ENCODE measurements at regions of chr6 and their contacts with region 1.

Region 1: DNA sequence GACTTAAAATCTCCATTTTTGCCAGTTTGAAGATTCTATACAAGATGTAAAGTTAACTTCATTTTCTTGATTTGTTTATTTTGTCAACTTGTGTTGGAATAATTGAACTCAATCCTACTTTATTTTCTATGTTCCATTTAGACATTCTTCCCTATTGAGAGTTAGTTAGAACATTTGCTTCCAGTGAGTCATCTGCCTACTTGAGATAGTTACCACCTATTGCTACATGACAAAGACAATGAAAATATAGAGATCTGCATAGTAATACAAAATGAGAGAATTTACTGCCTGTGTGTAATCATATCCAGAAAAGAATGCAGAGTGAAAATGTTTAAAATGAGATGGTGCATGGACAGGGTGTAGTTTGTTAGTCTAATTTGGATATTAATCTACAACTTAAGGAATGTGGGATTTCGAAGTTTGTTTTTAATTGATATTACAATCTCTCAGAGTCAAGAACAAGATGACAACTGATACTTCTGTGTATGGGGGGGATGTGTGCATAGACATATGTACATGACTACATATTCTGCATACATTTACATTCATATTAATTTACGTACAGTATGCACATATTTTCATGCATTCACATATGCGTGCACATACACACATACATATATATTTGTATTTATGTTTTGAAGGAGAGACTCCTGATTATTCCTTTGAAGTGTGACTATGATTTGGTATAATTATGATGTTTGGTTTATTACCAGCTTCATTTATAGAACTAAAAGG is 420.1 kb downstream of the NKAIN2 start:
- DNase-seq: peak; percentile 67
- H3K4me3 ChIP-seq: no peak overlapping the region
- H3K27ac ChIP-seq: peak overlapping the region; percentile 56
- H3K4me1 ChIP-seq: peaks cover 22% of the 10 kb centered on the region
- H3K27me3 ChIP-seq: no peaks in the 10 kb centered on the region
- CTCF ChIP-seq: no peak

Region 2: DNA sequence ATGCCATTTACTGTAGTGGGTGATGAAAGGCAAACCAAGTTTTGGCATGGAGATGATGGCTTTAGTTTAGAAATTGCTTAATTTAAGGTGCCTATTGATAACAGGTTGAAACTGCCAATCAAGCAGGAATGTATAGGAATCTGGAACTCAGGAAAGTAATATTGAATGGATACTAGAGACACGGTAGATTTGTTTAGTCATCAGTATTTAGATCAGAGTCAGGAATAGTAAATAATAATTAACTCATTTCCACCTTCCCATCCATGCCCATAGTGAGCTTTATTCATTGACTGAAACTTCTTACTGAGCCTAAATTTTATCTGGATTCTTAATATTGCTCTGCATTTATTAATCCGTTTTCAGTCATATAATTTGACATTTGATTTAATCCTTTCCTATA is 80.2 kb after region 1 on chr6:
- CTCF ChIA-PET with region 1: no interaction called
- dilution Hi-C with region 1: no loop called
- in situ Hi-C with region 1: no loop called
- intact Hi-C with region 1: loop called (anchors 2 kb)
- DNase-seq: no peak
- H3K4me3 ChIP-seq: no peak overlapping the region
- H3K27ac ChIP-seq: no peak overlapping the region
- H3K4me1 ChIP-seq: peaks cover 14% of the 10 kb centered on the region
- H3K27me3 ChIP-seq: no peaks in the 10 kb centered on the region
- CTCF ChIP-seq: no peak

Region 3: DNA sequence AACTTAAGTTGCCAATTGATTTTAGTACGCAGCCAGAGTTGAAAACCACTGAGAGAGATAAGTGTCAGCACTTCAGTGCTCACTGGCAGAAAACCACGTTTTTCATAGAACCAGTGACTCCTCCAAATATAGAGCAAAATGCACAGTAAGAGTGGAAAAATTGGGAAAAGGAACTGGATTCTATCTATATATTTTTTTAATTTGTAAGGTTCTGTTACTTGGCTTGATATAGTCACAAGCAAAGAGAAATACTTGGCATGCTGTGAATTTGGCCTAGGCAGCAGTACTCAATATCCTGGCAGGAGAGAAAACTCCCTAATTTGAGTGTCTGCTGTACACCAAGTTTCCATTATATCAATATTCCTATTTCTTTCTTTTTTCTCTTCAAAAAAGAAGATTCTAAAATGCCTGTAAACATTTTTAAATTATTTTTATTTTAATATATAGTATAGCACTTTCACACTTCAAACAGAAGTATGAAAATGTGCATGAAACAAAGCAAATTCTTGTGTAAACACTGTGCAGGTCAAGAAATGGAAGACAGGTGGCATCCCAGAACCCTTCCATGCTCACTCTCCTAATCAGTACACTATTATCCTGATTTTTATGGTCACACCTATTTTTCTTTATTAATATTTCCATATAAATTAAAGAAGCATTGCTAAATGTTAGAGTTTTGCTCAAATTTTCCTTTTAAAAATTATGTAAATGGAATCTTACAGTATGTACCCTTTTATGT is 176.7 kb after region 1 on chr6:
- CTCF ChIA-PET with region 1: no interaction called
- dilution Hi-C with region 1: no loop called
- in situ Hi-C with region 1: no loop called
- intact Hi-C with region 1: no loop called
- DNase-seq: no peak
- H3K4me3 ChIP-seq: no peak overlapping the region
- H3K27ac ChIP-seq: no peak overlapping the region
- H3K4me1 ChIP-seq: no peaks in the 10 kb centered on the region
- H3K27me3 ChIP-seq: no peaks in the 10 kb centered on the region
- CTCF ChIP-seq: peak; percentile 14 to 55

Region 4: DNA sequence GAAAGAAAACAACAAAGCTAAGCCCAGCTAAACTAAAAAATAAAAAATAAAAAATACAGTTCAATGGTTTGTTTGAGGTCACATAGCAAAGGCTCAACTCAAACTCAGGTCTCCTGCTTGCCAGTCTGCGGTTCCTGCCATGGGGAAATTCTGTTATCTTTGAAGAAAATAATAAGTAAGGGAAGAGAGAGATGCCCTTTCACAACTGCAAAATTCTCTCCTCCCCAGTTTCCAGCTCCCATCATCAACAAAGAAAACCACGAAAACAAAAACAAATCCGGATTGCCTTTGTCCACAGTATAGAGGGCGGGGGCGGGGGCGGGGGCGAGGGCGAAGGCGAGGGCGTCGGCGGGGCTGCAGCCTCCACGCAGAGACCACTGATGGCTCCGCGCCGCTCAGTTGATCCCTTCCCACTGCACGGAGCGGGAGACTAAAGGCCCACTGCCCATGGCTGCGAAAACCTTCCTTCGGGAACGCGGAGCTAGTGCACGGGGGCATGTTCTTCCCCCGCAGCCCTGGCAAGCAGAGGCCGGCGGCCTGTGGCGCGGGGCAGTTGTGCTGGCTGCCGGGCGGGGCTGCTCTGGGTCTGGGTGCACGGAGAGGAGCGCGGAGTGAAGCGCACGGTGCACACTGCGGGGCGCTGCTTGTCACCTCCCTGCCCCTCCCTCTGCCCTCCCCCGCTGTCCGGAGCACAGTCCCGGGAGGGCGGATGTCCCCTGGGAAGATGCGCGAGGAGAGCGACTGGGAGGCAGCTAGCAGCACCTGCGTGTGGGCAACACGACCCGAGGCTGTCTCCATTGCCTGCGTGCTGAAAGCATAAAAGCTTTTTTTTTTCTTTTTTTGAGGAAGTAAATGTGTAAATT is 875.7 kb after region 1 on chr6:
- CTCF ChIA-PET with region 1: no interaction called
- dilution Hi-C with region 1: no loop called
- in situ Hi-C with region 1: no loop called
- intact Hi-C with region 1: loop called (anchors 10 kb)
- DNase-seq: peak; percentile 44
- H3K4me3 ChIP-seq: peak overlapping the region; percentile 28 to 61 (median 50)
- H3K27ac ChIP-seq: no peak overlapping the region
- H3K4me1 ChIP-seq: peaks cover 62% of the 10 kb centered on the region
- H3K27me3 ChIP-seq: no peaks in the 10 kb centered on the region
- CTCF ChIP-seq: no peak